ENCODE measurements at regions of chr5 and their contacts with region 1.

Region 1: GRCh38 chr5:27962191-27962590 is 923.8 kb upstream of the CDH9 start:
- DNase-seq: no peak
- H3K4me3 ChIP-seq: no peak overlapping the region
- H3K27ac ChIP-seq: no peak overlapping the region
- H3K4me1 ChIP-seq: no peaks in the 10 kb centered on the region
- H3K27me3 ChIP-seq: no peaks in the 10 kb centered on the region
- CTCF ChIP-seq: no peak

Region 2: GRCh38 chr5:27598576-27598975 is 363.6 kb before region 1 on chr5:
- CTCF ChIA-PET with region 1: no interaction called
- POLR2A ChIA-PET with region 1: interaction called, 10 read pairs
- intact Hi-C with region 1: no loop called
- DNase-seq: no peak
- H3K4me3 ChIP-seq: no peak overlapping the region
- H3K27ac ChIP-seq: no peak overlapping the region
- H3K4me1 ChIP-seq: no peaks in the 10 kb centered on the region
- H3K27me3 ChIP-seq: no peaks in the 10 kb centered on the region
- CTCF ChIP-seq: no peak

Region 3: GRCh38 chr5:28249771-28250415 is 287.7 kb after region 1 on chr5:
- CTCF ChIA-PET with region 1: no interaction called
- POLR2A ChIA-PET with region 1: no interaction called
- intact Hi-C with region 1: no loop called
- DNase-seq: no peak
- H3K4me3 ChIP-seq: no peak overlapping the region
- H3K27ac ChIP-seq: no peak overlapping the region
- H3K4me1 ChIP-seq: no peaks in the 10 kb centered on the region
- H3K27me3 ChIP-seq: no peaks in the 10 kb centered on the region
- CTCF ChIP-seq: no peak